Posterior vena cava (tissue), 2 donors: ENCODE measurements at regions of chr11 and their contacts with region 1.

Region 1: GRCh38 chr11:98979210-98979609 is 41.5 kb upstream of the CNTN5 start:
- DNase-seq: no peak

Region 2: DNA sequence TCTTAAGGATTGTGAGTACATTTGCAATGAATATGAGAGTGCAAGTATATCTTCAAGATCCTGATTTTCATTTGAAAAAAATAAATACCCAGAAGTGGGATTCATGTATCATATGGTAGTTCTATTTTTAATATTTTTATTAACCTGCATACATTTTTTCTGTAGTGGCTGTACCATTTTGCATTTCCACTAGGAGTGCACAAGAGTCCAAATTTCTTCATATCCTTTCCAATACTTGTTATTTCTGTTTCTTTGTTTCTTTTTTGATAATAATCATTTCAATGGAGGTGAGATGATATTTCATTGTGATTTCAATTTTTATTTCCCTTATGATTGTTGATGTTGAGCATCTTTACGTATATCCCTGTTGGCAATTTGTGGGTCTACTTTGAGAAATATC is 718.2 kb before region 1 on chr11:
- intact Hi-C with region 1: loop called in 1 of 2 experiments (anchors 5 kb)
- DNase-seq: no peak

Region 3: GRCh38 chr11:98944461-98944860 is 34.7 kb before region 1 on chr11:
- intact Hi-C with region 1: no loop called
- DNase-seq: no peak